Vagina (tissue), 2 donors: ENCODE measurements at regions of chrX and their contacts with region 1.

Region 1: GRCh38 chrX:115642895-115643530 is 82.0 kb downstream of the PLS3 start:
- DNase-seq: no peak
- H3K4me3 ChIP-seq: no peak overlapping the region
- H3K27ac ChIP-seq: peak overlapping the region; percentile 54
- H3K4me1 ChIP-seq: no peaks in the 10 kb centered on the region
- H3K27me3 ChIP-seq: no peaks in the 10 kb centered on the region
- CTCF ChIP-seq: peak; percentile 87 to 94 (median 92)
- POLR2A ChIP-seq: no peak

Region 2: GRCh38 chrX:115330498-115331168 is 312.4 kb before region 1 on chrX:
- intact Hi-C with region 1: loop called (anchors 2 kb)
- DNase-seq: no peak
- H3K4me3 ChIP-seq: no peak overlapping the region
- H3K27ac ChIP-seq: no peak overlapping the region
- H3K4me1 ChIP-seq: no peaks in the 10 kb centered on the region
- H3K27me3 ChIP-seq: no peaks in the 10 kb centered on the region
- CTCF ChIP-seq: peak; percentile 77 to 87 (median 77)
- POLR2A ChIP-seq: no peak